ENCODE measurements at regions of chr10 and their contacts with region 1.

Region 1: GRCh38 chr10:13956826-13957225 is 370.1 kb downstream of the PRPF18 start:
- DNase-seq: peak; percentile 66 to 78
- ATAC-seq: peak; percentile 79 to 85
- H3K4me3 ChIP-seq: no peak overlapping the region
- H3K27ac ChIP-seq: peak overlapping the region; percentile 38 to 68 (median 62)
- H3K4me1 ChIP-seq: peaks cover 0 to 9% of the 10 kb centered on the region in 2 donors
- H3K27me3 ChIP-seq: no peaks in the 10 kb centered on the region
- CTCF ChIP-seq: peak in 3 of 5 experiments; percentile 25 to 34 (median 26)
- POLR2A ChIP-seq: no peak

Region 2: GRCh38 chr10:13659897-13660550 is 296.8 kb before region 1 on chr10:
- in situ Hi-C with region 1: loop called in 1 of 4 experiments (anchors 25 kb)
- intact Hi-C with region 1: no loop called
- DNase-seq: peak in 1 of 2 donors; percentile 43
- ATAC-seq: peak; percentile 55 to 67
- H3K4me3 ChIP-seq: no peak overlapping the region
- H3K27ac ChIP-seq: peak overlapping the region in 2 of 4 donors; percentile 4 to 18
- H3K4me1 ChIP-seq: peaks cover 5 to 11% of the 10 kb centered on the region in 2 donors
- H3K27me3 ChIP-seq: no peaks in the 10 kb centered on the region
- CTCF ChIP-seq: peak; percentile 76 to 90 (median 83)
- POLR2A ChIP-seq: no peak

Region 3: GRCh38 chr10:13787015-13787421 is 169.8 kb before region 1 on chr10:
- in situ Hi-C with region 1: loop called in 1 of 4 experiments (anchors 5 kb)
- intact Hi-C with region 1: loop called (anchors 1 kb)
- DNase-seq: no peak
- ATAC-seq: peak in 1 of 2 donors; percentile 15
- H3K4me3 ChIP-seq: no peak overlapping the region
- H3K27ac ChIP-seq: peak overlapping the region; percentile 21 to 76 (median 39)
- H3K4me1 ChIP-seq: peaks cover 8 to 25% of the 10 kb centered on the region in 2 donors
- H3K27me3 ChIP-seq: no peaks in the 10 kb centered on the region
- CTCF ChIP-seq: no peak
- POLR2A ChIP-seq: no peak

Region 4: GRCh38 chr10:13891128-13892000 is 65.5 kb before region 1 on chr10:
- in situ Hi-C with region 1: no loop called
- intact Hi-C with region 1: loop called (anchors 10 kb)
- DNase-seq: no peak
- ATAC-seq: no peak
- H3K4me3 ChIP-seq: peak overlapping the region; percentile 56 to 62 (median 59)
- H3K27ac ChIP-seq: peak overlapping the region; percentile 68 to 73 (median 70)
- H3K4me1 ChIP-seq: peaks cover 0 to 3% of the 10 kb centered on the region in 2 donors
- H3K27me3 ChIP-seq: peaks cover 7 to 10% (median 9%) of the 10 kb centered on the region in 3 donors
- CTCF ChIP-seq: no peak
- POLR2A ChIP-seq: no peak

Region 5: DNA sequence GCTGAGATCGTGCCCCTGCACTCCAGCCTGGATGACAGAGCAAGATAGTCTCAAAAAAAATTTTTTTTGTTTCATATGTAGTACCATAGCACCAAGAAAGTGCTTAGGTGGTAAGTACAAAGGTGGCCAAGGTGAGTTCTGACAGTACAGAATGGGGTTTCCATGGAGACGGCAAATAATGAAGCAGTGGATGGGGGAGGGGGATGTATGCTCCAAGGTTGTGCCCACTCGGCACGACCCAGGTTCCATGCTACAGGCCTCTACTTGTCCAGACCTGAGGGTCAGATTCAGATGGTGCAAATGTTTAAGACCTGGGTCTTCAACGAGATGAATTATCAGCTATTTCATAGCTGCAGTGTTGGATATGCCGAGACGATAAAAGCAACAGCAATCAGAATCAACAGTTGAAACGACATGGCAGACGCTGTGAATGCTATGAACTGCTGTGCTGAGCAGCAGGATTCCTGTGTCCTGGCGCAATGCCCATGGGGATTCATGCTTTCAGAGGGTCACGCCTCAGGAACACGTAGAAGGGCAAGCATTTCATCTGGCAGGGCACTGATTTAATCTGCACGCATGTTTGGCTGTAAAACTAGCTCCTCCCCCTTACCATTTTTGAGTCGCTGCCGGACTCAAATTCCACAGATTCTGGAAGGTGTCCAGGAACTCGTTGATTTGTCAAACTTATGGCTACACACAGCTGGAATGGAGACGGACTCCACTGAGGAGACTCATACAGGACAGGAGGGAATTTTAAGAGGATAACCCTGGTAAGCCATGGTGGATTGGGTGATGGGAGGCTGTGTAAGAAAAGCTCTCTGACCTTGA is 117.4 kb after region 1 on chr10:
- in situ Hi-C with region 1: no loop called
- intact Hi-C with region 1: loop called (anchors 10 kb)
- DNase-seq: peak; percentile 73 to 84
- ATAC-seq: peak; percentile 94 to 97
- H3K4me3 ChIP-seq: peak overlapping the region in 2 of 4 donors; percentile 1 to 8
- H3K27ac ChIP-seq: peak overlapping the region in 1 of 4 donors; percentile 37
- H3K4me1 ChIP-seq: peaks cover 6 to 17% of the 10 kb centered on the region in 2 donors
- H3K27me3 ChIP-seq: no peaks in the 10 kb centered on the region
- CTCF ChIP-seq: no peak
- POLR2A ChIP-seq: no peak

Measured in gastrocnemius medialis (tissue), 4 donors.